Activated T-helper 1 cell treated with anti-CD3 and anti-CD28 coated beads, Interleukin-12 subunit alpha, Interleukin-12 subunit beta, Interleukin-2, Interleukin-4 antibody, amounts not matched to agents 30 ng/mL and 10 ng/mL and 1 ng/mL, durations not matched to agents 14 hours and 24 hours and 36 hours (primary cell): ENCODE measurements at regions of chr5 and their contacts with region 1.

Region 1: DNA sequence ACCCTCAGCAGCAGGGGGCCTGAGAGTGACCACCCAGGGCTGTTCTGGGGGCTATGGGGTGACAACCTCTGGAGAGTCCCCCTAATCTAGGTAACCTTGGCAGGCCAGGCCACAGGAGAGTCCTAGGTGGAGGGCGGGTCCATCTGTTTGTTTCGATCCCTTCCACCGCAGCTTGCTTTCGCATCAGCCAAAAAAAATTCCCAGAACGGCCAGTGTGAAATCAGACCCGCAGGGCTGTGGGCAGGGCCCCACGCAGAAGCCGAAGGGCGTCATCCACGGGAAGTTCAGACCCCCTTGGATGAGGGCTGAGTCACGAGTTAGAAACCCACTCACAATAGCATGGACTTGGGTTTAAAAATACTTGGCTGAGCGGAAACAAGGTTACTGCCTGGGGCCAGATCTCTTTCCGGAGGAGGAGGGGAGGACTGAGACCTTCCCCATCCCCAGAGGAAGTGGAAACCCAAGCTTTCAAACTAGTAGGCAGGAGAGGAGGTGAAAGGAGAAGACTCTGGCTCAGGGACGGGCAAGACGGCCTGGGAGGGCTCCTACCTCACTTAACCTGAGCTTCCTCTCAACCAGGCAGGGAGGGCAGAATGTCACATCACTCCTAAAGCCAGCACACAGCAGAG is 8.5 kb downstream of the STK10 start:
- DNase-seq: peak; percentile 51
- H3K4me3 Mint-ChIP-seq: peak overlapping the region; percentile 87
- H3K27ac Mint-ChIP-seq: peak overlapping the region; percentile 100
- H3K4me1 Mint-ChIP-seq: peaks cover 87% of the 10 kb centered on the region
- H3K27me3 Mint-ChIP-seq: no peaks in the 10 kb centered on the region

Region 2: DNA sequence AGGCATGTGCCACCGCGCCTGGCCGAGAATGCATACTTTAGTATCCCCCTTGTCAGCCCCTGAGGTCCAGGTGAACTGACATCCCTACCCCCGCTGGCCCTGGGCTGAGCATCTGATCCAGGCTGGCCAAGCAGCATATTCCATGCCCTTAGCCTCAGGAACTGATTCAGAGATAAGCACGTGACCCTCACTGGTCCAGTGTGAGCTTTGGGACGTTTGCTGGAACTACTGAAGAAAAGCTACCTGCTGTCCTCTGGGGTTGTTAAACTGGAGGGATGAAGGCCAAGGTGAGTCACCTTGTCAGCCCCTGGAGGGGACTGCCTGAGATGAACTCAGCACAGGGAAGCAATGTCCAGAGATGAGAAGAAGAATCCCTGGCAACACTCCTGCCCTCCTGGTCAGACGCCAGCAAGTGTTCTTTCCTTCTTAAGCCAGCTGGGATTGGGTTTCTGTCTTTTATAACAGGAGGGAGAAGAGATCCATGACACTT is 113.9 kb before region 1 on chr5:
- intact Hi-C with region 1: loop called (anchors 2 kb)
- DNase-seq: no peak
- H3K4me3 Mint-ChIP-seq: no peak overlapping the region
- H3K27ac Mint-ChIP-seq: no peak overlapping the region
- H3K4me1 Mint-ChIP-seq: peaks cover 47% of the 10 kb centered on the region
- H3K27me3 Mint-ChIP-seq: no peaks in the 10 kb centered on the region

Region 3: DNA sequence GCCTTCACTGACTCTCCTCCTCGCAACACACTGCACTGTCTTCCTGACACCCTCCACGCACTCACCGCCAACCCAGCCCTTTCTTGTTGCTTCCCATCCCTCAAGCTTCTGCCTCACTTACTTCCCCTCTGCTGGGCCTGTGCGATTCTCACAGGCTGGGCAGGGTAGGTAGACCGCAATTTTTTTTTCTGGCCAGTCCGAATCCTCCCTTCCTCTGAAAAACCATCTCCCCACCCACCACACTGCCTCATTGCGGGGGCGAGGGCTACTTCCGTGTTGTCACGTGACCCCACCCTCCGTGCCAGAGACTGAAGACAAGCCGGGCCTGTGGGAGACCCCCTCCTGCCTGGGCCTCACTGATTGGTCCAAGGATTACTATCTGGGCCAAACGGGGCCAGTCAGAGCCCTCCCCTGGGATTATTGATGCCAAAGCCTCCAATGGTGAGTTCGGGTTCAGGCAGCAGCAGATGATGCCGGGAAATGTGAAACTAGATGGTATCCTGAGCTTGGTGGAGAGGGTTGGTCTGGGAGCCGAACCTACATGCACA is 64.5 kb before region 1 on chr5:
- intact Hi-C with region 1: loop called (anchors 1 kb)
- DNase-seq: peak; percentile 68
- H3K4me3 Mint-ChIP-seq: peak overlapping the region; percentile 78
- H3K27ac Mint-ChIP-seq: peak overlapping the region; percentile 91
- H3K4me1 Mint-ChIP-seq: peaks cover 67% of the 10 kb centered on the region
- H3K27me3 Mint-ChIP-seq: no peaks in the 10 kb centered on the region

Region 4: DNA sequence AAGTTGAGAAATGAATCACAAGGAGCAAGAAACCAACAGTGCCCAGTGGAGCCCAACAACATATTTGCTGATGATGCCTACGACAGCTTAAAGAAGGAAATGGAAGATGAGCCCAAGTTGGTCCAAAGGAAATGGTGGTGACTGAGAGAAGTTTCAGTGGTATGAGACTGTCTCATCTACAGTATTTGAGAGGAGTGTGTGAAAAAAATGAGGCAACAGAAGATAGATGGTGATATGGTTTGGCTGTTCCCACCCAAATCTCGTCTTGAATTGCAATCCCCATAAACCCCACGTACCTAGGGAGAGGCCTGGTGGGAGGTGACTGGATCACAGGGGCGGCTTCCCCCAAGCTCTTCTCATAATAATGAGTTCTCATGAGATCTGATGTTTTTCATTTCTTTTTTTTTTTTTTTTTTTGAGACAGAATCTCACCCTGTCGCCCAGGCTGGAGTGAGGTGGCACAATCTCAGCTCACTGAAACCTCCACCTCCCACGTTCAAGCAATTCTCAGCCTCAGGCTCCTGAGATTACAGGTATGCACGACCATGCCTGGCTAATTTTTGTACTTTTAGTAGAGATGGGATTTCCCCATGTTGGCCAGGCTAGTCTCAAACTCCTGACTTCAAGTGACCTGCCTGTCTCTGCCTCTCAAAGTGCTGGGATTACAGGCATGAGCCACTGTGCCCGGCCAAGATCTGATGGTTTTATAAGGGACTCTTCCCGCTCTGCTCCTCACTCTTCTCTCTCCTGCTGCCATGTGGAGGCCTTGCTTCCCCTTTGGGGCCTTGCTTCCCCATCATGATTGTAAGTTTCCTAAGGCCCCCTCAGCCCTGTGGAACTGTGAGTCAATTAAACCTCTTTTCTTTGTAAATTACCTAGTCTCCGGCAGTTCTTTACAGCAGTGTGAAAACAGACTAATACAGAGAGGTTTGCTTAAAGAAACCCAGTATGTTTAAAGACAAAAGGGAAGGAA is 44.7 kb after region 1 on chr5:
- intact Hi-C with region 1: loop called (anchors 2 kb)
- DNase-seq: no peak
- H3K4me3 Mint-ChIP-seq: no peak overlapping the region
- H3K27ac Mint-ChIP-seq: peak overlapping the region; percentile 87
- H3K4me1 Mint-ChIP-seq: peaks cover 28% of the 10 kb centered on the region
- H3K27me3 Mint-ChIP-seq: peaks cover 5% of the 10 kb centered on the region